ENCODE measurements at regions of chr12 and their contacts with region 1.

Region 1: DNA sequence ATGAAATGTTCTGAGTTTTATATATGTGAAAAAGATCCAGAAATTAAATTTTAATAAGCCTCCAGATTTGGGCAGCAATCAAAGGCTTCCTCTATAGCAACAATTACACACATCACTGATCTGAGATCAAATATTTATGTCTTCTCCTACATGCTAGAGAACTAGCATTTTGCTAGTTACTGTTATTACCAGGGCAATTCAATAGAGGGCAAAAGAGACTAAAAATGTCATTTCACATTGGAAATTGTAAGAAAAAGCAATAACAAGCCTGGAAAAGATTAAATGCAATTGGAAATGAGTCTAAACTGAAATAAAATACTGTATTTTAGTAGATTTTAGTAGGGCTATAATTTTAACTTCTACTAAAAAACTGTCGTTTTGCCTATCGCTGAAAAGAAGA is 32.6 kb upstream of the ANO6 start:
- DNase-seq: no peak
- H3K4me3 ChIP-seq: no peak overlapping the region
- H3K27ac ChIP-seq: no peak overlapping the region
- H3K4me1 ChIP-seq: no peaks in the 10 kb centered on the region
- H3K27me3 ChIP-seq: no peaks in the 10 kb centered on the region
- CTCF ChIP-seq: peak; percentile 20 to 47

Region 2: GRCh38 chr12:45234139-45234846 is 51.0 kb after region 1 on chr12:
- CTCF ChIA-PET with region 1: no interaction called
- dilution Hi-C with region 1: no loop called
- in situ Hi-C with region 1: no loop called
- intact Hi-C with region 1: no loop called
- DNase-seq: peak; percentile 96
- H3K4me3 ChIP-seq: peak overlapping the region in 1 of 3 experiments; percentile 28
- H3K27ac ChIP-seq: peak overlapping the region; percentile 98
- H3K4me1 ChIP-seq: peaks cover 51% of the 10 kb centered on the region
- H3K27me3 ChIP-seq: no peaks in the 10 kb centered on the region
- CTCF ChIP-seq: no peak

Region 3: GRCh38 chr12:45388545-45388944 is 205.3 kb after region 1 on chr12:
- CTCF ChIA-PET with region 1: no interaction called
- dilution Hi-C with region 1: no loop called
- in situ Hi-C with region 1: loop called (anchors 10 kb)
- intact Hi-C with region 1: no loop called
- DNase-seq: peak; percentile 16
- H3K4me3 ChIP-seq: no peak overlapping the region
- H3K27ac ChIP-seq: no peak overlapping the region
- H3K4me1 ChIP-seq: no peaks in the 10 kb centered on the region
- H3K27me3 ChIP-seq: no peaks in the 10 kb centered on the region
- CTCF ChIP-seq: peak; percentile 49 to 65

Measured in mammary epithelial cell (primary cell).